Gastrocnemius medialis (tissue), 4 donors: ENCODE measurements at regions of chr15 and their contacts with region 1.

Region 1: GRCh38 chr15:75453703-75454470 is 2.4 kb upstream of the SIN3A start:
- DNase-seq: peak; percentile 98 to 99
- ATAC-seq: peak; percentile 45 to 50
- H3K4me3 ChIP-seq: peak overlapping the region; percentile 87 to 98 (median 94)
- H3K27ac ChIP-seq: peak overlapping the region; percentile 98 to 100 (median 100)
- H3K4me1 ChIP-seq: peaks cover 21 to 29% of the 10 kb centered on the region in 2 donors
- H3K27me3 ChIP-seq: no peaks in the 10 kb centered on the region
- CTCF ChIP-seq: no peak
- POLR2A ChIP-seq: peak; percentile 82 to 86

Region 2: DNA sequence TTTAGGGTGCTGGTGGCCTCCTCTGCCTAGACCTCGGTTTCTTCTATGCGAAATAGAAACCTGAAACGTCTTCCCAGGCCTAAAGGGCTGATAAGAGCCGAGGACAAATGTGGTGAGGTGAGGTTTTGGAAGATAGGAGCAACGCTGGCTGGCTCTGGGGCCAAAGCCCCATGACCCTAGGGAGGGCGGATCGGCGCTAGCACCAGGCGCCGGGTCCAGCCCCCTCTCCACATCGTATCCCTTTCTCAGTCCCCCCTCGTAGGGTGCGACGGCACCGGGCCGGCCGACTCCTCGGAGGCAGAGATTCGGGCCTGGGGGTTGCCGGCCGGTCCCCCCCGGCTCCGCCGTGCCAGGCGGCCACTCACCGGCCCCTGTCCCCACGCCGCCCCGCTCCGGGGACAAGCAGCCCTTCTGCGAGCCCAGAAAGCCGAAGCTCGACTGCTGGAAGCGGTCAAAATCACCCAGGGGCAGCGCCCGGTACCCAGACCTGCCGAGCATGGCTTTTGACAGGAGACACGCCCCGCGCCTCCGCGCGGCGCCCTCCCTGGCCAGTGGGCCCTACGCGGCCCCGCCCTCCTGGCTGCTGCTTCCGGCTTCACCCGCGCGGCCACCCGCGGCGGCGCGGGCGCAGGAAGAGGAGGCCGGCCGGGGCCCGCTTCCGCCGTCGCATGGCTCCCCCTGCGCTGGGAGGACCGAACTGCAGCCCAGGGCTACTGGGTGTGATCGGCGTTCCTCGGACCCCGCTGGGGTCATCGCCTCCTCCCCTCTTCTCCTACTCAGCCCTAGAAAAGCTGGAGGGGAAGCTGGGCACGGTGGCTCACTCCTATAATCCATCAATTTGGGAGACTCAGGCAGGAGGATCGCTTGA is 1461.9 kb before region 1 on chr15 and contains the start of gene STOML1:
- in situ Hi-C with region 1: no loop called
- intact Hi-C with region 1: loop called (anchors 5 kb)
- DNase-seq: peak; percentile 76 to 90
- ATAC-seq: peak; percentile 75 to 77
- H3K4me3 ChIP-seq: peak within 1 kb of the TSS; percentile 82 to 96 (median 91)
- H3K27ac ChIP-seq: peak within 1 kb of the TSS; percentile 88 to 94 (median 90)
- H3K4me1 ChIP-seq: peaks cover 65 to 78% of the 10 kb centered on the region in 2 donors
- H3K27me3 ChIP-seq: no peaks in the 10 kb centered on the region
- CTCF ChIP-seq: peak; percentile 81 to 97 (median 96)
- POLR2A ChIP-seq: peak; percentile 77
- total RNA-seq, gene STOML1: 15.2 to 28.8 (median 16.9) TPM

Region 3: GRCh38 chr15:75367913-75368688 is 85.8 kb before region 1 on chr15 and contains the start of gene MAN2C1:
- in situ Hi-C with region 1: no loop called
- intact Hi-C with region 1: loop called (anchors 1 kb)
- DNase-seq: peak; percentile 92 to 97
- ATAC-seq: peak; percentile 89 to 93
- H3K4me3 ChIP-seq: peak within 1 kb of the TSS; percentile 87 to 99 (median 96)
- H3K27ac ChIP-seq: peak within 1 kb of the TSS; percentile 96 to 100 (median 98)
- H3K4me1 ChIP-seq: peaks cover 18 to 19% of the 10 kb centered on the region in 2 donors
- H3K27me3 ChIP-seq: no peaks in the 10 kb centered on the region
- CTCF ChIP-seq: peak in 3 of 5 experiments; percentile 72 to 81 (median 80)
- POLR2A ChIP-seq: peak; percentile 86 to 89
- total RNA-seq, gene MAN2C1: 38.9 to 116 (median 62.8) TPM

Region 4: DNA sequence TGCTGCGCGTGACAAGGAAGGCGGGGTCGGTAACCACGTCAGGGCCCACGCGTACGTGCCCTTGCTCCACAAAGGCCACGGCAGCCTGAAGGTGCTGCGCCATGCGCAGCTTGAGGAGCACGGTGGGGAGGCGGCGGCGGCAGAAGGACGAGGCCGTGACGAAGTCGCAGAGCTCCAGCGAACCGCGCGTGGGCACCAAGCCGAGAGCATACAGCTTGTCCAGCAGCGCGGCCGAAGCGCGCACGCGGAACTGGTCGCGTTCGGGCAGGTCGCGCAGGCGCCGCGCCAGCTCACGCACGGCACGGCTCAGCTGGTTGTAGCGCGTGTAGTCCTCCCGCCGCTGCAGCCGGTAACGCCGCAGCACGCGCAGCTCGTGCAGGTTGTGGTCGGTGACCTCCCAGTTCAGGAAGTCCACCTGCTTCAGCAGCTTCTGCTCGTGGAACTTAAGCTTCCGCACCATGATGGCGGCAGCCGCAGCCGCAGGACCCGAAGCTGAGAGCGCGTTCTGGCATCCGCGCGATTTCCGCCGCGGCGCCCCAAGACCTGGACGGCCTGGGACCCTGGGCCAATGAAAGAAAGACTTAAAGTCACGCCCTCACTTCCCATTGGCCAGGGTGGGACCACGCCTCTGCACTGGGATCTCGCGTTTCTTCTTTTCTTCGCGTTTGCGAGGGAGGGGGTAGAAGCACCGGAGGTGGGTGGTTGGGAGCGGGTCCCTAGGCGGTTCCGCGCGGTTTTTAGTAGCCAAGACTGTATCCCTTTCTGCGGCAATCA is 186.0 kb after region 1 on chr15 and contains the start of gene IMP3:
- in situ Hi-C with region 1: no loop called
- intact Hi-C with region 1: loop called (anchors 1 kb)
- DNase-seq: peak; percentile 95 to 97
- ATAC-seq: peak; percentile 90 to 92
- H3K4me3 ChIP-seq: peak within 1 kb of the TSS; percentile 75 to 97 (median 82)
- H3K27ac ChIP-seq: peak within 1 kb of the TSS; percentile 87 to 95 (median 92)
- H3K4me1 ChIP-seq: peaks cover 26 to 28% of the 10 kb centered on the region in 2 donors
- H3K27me3 ChIP-seq: no peaks in the 10 kb centered on the region
- CTCF ChIP-seq: peak in 1 of 5 experiments; percentile 26
- POLR2A ChIP-seq: peak; percentile 89 to 94
- total RNA-seq, gene IMP3: 110 to 184 (median 153) TPM

Region 5: DNA sequence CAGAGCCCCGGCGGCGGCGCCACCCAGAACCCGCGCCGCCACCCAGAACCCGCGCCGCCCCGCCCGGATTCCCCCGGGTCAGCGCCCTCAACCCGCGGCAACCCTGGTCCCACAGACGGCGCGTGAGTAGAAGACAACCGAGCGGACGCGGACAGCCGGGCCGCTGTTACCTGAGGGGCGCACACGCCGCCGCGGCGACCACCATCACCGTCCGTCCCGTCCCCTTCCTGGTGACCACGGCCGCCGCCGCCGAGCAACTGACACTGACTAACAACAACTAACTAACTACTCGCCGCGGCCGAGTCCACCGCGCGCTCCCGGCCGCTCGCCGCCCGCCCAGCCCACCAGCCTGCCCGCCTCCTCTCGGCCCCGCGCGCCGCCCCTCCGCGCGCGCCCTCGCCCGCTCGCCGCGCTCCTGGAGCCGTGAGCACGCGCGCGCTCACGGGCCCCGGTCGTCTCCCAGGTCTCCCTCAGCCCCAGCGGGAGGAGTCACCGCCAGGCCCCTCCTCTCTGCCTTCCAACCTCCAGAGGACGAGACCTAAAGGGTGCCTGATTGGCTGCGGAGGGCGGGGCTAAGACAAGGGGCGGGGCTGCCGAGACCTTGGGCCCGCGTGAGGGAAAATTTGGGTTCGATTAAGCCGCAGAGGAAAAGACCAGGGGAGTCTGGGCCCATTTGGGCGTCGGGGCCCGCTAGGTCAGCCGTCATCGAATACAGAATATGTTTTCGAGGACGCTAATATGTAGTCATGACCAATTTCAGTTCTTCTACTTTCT is 1966.1 kb after region 1 on chr15 and contains the start of gene PEAK1:
- in situ Hi-C with region 1: no loop called
- intact Hi-C with region 1: loop called (anchors 10 kb)
- DNase-seq: peak; percentile 99 to 100
- ATAC-seq: peak; percentile 88 to 91
- H3K4me3 ChIP-seq: peak within 1 kb of the TSS; percentile 77 to 91 (median 84)
- H3K27ac ChIP-seq: peak within 1 kb of the TSS; percentile 87 to 98 (median 97)
- H3K4me1 ChIP-seq: peaks cover 52 to 69% of the 10 kb centered on the region in 2 donors
- H3K27me3 ChIP-seq: no peaks in the 10 kb centered on the region
- CTCF ChIP-seq: peak in 1 of 5 experiments; percentile 5
- POLR2A ChIP-seq: peak; percentile 96
- total RNA-seq, gene PEAK1: 17.8 to 21.9 (median 20.8) TPM